Left lung (tissue), 14 donors: ENCODE measurements at regions of chr6 and their contacts with region 1.

Region 1: DNA sequence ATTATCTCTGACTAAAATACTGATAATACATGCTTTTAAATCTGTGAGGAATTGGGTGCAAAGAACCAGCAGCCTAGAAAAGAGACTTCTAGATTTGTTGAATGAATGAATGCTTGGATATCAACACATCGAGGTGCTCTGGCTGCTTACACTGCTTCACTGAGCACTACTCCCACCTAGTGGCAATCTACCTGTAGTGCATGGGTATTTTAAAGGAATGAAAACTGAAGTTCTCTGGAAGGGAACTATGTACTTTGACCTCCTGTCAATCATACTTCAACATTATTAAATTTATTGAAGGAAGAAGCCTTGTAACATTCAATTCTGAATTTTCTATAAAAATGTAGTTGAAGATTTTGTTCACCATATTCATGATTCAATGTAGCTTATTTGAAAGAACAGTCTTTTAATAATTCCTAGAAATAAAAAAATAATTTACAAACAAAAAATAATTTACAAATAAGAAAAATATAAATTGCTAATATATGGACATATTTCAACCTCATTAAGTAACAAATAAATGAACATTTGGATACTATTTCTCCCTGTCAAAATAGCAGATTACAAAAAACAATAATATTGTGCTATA is 111.2 kb upstream of the MMS22L start:
- DNase-seq: peak in 2 of 4 donors; percentile 16 to 53
- ATAC-seq: peak; percentile 96
- H3K4me3 ChIP-seq: no peak overlapping the region
- H3K27ac ChIP-seq: no peak overlapping the region
- H3K4me1 ChIP-seq: no peaks in the 10 kb centered on the region
- H3K27me3 ChIP-seq: no peaks in the 10 kb centered on the region
- CTCF ChIP-seq: peak; percentile 72 to 89

Region 2: GRCh38 chr6:97009781-97010492 is 384.3 kb before region 1 on chr6:
- intact Hi-C with region 1: no loop called
- DNase-seq: no peak
- ATAC-seq: no peak
- H3K4me3 ChIP-seq: no peak overlapping the region
- H3K27ac ChIP-seq: no peak overlapping the region
- H3K4me1 ChIP-seq: no peaks in the 10 kb centered on the region
- H3K27me3 ChIP-seq: no peaks in the 10 kb centered on the region
- CTCF ChIP-seq: no peak

Region 3: GRCh38 chr6:97186416-97186999 is 207.7 kb before region 1 on chr6:
- intact Hi-C with region 1: loop called in 1 of 2 experiments (anchors 10 kb)
- DNase-seq: peak in 2 of 4 donors; percentile 50 to 67
- ATAC-seq: peak; percentile 91
- H3K4me3 ChIP-seq: no peak overlapping the region
- H3K27ac ChIP-seq: no peak overlapping the region
- H3K4me1 ChIP-seq: peaks cover 0 to 3% of the 10 kb centered on the region in 2 donors
- H3K27me3 ChIP-seq: no peaks in the 10 kb centered on the region
- CTCF ChIP-seq: peak; percentile 72 to 91

Region 4: DNA sequence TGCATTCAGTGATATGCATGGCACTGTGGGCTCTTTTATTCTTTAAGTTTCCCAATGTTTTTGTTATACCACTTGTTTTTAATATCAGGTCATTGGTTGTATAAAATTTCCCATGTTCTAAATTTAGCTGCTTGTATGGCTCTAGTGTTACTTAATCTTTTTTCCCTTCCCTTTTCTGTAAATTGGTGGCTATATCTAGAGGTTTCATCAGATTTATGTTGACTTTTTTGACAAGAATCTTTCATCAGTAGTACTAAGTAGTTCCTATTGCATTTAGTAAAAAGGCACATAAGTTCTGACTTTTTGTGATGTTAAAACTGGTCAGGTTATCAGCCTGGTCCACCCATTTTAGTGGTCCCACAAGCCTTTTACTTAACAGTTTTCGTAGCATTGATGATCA is 162.3 kb before region 1 on chr6:
- intact Hi-C with region 1: no loop called
- DNase-seq: no peak
- ATAC-seq: no peak
- H3K4me3 ChIP-seq: no peak overlapping the region
- H3K27ac ChIP-seq: no peak overlapping the region
- H3K4me1 ChIP-seq: no peaks in the 10 kb centered on the region
- H3K27me3 ChIP-seq: no peaks in the 10 kb centered on the region
- CTCF ChIP-seq: no peak

Region 5: DNA sequence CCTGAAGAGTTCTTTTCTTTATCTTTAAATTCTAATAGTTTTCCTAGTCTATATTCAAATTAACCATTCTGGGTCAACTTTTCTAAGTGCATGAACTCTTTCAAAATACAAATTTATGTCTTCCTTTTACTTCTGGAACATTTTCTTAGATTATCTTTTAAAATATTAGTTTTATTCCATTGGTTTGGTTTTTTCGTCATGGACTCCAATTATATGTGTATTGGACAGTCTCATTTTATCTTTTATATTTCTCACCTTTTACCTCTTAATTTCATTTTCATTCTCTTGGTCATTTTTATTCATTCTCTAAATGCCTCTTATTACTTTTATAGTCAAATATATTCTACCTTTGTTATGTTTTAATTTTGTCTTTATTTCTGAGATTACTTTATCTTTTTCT is 245.4 kb after region 1 on chr6:
- intact Hi-C with region 1: no loop called
- DNase-seq: no peak
- ATAC-seq: no peak
- H3K4me3 ChIP-seq: no peak overlapping the region
- H3K27ac ChIP-seq: no peak overlapping the region
- H3K4me1 ChIP-seq: no peaks in the 10 kb centered on the region
- H3K27me3 ChIP-seq: no peaks in the 10 kb centered on the region
- CTCF ChIP-seq: no peak